Right lobe of liver (tissue), 6 donors: ENCODE measurements at regions of chr15 and their contacts with region 1.

Region 1: GRCh38 chr15:71386448-71387236 is 271.4 kb downstream of the THSD4 start:
- DNase-seq: no peak
- ATAC-seq: peak in 3 of 4 donors; percentile 67 to 80 (median 76)
- H3K4me3 ChIP-seq: no peak overlapping the region
- H3K27ac ChIP-seq: no peak overlapping the region
- H3K4me1 ChIP-seq: peaks cover 0 to 15% (median 2%) of the 10 kb centered on the region in 4 donors
- H3K27me3 ChIP-seq: no peaks in the 10 kb centered on the region
- CTCF ChIP-seq: peak; percentile 46 to 64 (median 52)
- POLR2A ChIP-seq: no peak

Region 2: GRCh38 chr15:71437404-71438318 is 51.0 kb after region 1 on chr15:
- intact Hi-C with region 1: loop called in 1 of 2 experiments (anchors 5 kb)
- DNase-seq: no peak
- ATAC-seq: no peak
- H3K4me3 ChIP-seq: no peak overlapping the region
- H3K27ac ChIP-seq: no peak overlapping the region
- H3K4me1 ChIP-seq: peaks cover 0 to 6% (median 0%) of the 10 kb centered on the region in 4 donors
- H3K27me3 ChIP-seq: no peaks in the 10 kb centered on the region
- CTCF ChIP-seq: no peak
- POLR2A ChIP-seq: no peak